ENCODE measurements at regions of chr14 and their contacts with region 1.

Region 1: DNA sequence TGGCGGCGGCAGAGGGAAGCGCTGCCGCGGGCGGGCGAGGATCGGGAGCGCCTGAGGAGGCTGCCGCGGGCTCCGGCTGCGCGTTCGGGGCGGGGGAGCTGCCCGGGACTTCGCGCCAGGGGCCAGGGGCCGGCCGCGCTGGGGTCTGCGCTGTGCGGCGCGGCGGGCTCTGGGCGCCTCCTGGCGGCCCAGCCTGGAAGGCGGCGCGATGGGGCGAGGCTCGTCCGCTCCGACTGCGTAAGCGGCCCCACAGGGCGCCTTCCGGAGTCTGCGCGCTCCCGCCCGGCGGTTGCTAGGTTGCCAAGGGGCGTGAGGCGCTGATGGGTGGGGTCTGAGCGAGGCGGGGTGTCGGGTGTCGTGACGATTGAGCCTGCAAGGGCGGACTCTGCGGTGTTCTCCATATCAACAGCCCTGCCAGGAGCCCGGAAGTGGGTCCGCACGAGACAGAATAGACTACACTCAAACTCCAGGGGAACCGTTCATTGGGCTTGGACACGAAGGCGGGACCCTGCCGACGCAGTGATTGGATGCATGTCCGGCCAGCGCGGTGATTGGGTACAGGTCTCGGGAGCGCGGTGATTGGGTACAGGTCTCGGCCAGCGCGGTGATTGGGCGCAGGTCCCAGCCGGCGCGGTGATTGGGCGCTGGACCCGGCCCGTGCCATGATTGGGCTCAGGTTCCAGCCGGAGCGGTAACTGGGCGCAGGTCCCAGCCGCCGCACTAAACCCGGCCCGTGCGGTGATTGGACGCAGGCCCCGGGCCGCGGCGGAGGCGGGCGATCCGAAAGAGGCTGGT is at the start of gene TEDC1:
- DNase-seq: peak; percentile 99 to 100 (median 100)

Region 2: GRCh38 chr14:105369653-105370040 is 121.1 kb before region 1 on chr14:
- intact Hi-C with region 1: loop called (anchors 2 kb)
- DNase-seq: no peak

Region 3: GRCh38 chr14:105738261-105739037 is 247.7 kb after region 1 on chr14:
- intact Hi-C with region 1: no loop called
- DNase-seq: peak in 2 of 10 donors; percentile 52 to 57